HepG2 (cell line): ENCODE measurements at regions of chr2 and their contacts with region 1.

Region 1: GRCh38 chr2:191869178-191869577 is 22.3 kb upstream of the CAVIN2 start:
- DNase-seq: peak; percentile 67
- ATAC-seq: peak; percentile 8; the same call in 1 of the 3 replicates
- H3K4me3 ChIP-seq: no peak overlapping the region
- H3K27ac ChIP-seq: peak overlapping the region; percentile 1
- H3K4me1 ChIP-seq: peaks cover 69% of the 10 kb centered on the region
- H3K27me3 ChIP-seq: no peaks in the 10 kb centered on the region
- CTCF ChIP-seq: peak; percentile 74
- EP300 ChIP-seq: peak in 1 of 2 experiments; percentile 64; a peak in 1 of 4 replicates
- POLR2A ChIP-seq: no peak
- RAD21 ChIP-seq: peak; percentile 38; the same call in 1 of the 2 replicates

Region 2: GRCh38 chr2:191881982-191882816 is 13.0 kb after region 1 on chr2:
- CTCF ChIA-PET with region 1: no interaction called
- POLR2A ChIA-PET with region 1: interaction called, 3 read pairs
- in situ Hi-C with region 1: no loop called
- intact Hi-C with region 1: loop called (anchors 1 kb)
- DNase-seq: peak; percentile 92
- ATAC-seq: peak; percentile 96
- H3K4me3 ChIP-seq: no peak overlapping the region
- H3K27ac ChIP-seq: peak overlapping the region; percentile 62
- H3K4me1 ChIP-seq: peaks cover 65% of the 10 kb centered on the region
- H3K27me3 ChIP-seq: no peaks in the 10 kb centered on the region
- CTCF ChIP-seq: no peak
- EP300 ChIP-seq: peak; percentile 60 to 92; a peak in 3 of 4 replicates
- POLR2A ChIP-seq: no peak
- RAD21 ChIP-seq: 0 out of 2 replicates have a peak, but pooled peaks have one; percentile 27